ACHN (cell line): ENCODE measurements at regions of chr13 and their contacts with region 1.

Region 1: GRCh38 chr13:110216398-110217041 is 90.4 kb downstream of the COL4A1 start:
- DNase-seq: no peak

Region 2: GRCh38 chr13:110444226-110444653 is 227.7 kb after region 1 on chr13:
- in situ Hi-C with region 1: loop called (anchors 25 kb)
- DNase-seq: peak; percentile 53